Gastrocnemius medialis (tissue), 4 donors: ENCODE measurements at regions of chr19 and their contacts with region 1.

Region 1: DNA sequence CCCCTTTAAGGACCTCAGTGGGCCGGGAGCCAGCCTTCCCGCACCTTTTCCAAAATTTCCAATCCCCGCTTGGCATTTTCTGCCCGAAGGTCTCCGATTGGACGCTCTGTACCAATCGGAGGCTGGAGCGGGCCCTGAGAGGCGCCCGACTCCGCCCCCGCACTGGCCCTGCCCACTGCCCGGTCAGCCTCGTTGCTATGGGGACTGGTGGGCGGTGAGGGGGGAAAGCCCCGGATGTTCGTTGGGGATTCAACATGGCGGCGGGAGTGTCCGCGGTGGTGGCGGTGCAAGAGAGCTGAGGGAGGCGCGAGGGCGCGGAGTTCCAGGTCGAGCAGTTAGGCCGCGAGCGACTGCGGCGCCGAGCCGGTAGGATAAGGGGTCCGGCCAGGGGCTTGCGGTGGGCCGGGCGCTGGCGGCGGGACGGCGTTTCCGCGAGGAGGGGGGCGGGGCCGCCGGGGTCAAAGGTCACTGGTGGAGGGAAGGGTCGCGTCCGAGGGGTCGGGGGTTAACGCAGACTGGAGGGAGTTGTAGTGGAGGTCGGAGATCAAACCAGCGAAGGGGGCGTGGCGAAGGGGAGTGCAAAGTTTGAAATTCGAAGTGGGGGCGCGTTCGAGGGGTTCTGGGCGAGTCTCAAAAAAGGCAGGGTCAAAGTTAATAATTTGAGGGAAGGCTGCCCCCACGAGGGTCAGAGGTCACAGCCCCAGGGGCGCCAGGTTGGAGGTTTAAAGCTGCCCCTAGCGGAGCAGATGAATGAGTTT is at the start of gene PAK4:
- DNase-seq: peak; percentile 97 to 98
- ATAC-seq: peak; percentile 98
- H3K4me3 ChIP-seq: peak within 1 kb of the TSS; percentile 73 to 96 (median 82)
- H3K27ac ChIP-seq: peak within 1 kb of the TSS; percentile 76 to 90 (median 80)
- H3K4me1 ChIP-seq: peaks cover 13 to 29% of the 10 kb centered on the region in 2 donors
- H3K27me3 ChIP-seq: peaks cover 0 to 4% (median 3%) of the 10 kb centered on the region in 3 donors
- CTCF ChIP-seq: no peak
- POLR2A ChIP-seq: peak; percentile 30 to 47
- total RNA-seq, gene PAK4: 4.7 to 11.7 (median 8.3) TPM

Region 2: DNA sequence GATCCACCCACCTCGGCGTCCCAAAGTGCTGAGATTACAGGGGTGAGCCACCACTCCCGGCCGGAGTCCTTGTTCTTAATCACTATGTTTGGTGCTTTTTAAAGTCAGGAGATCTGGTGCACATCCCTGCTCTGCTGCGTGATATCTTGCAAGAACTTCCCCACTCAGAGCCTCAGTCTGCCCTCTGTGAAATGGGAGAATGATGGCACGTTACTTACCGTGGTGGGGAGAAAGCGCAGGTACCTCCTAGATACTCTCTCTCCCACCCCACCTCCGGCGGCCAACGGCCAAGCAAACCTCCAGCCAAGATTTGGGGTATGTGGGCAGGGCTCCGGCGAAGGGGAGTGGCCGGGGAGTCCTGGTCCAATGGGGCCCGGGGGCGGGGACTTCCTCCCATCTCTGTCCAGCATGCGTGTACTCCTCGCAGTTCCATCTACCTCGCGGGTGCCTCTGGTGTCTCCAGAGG is 692.4 kb before region 1 on chr19 and contains the start of gene RYR1:
- in situ Hi-C with region 1: no loop called
- intact Hi-C with region 1: no loop called
- DNase-seq: peak; percentile 92 to 96
- ATAC-seq: peak; percentile 63 to 66
- H3K4me3 ChIP-seq: peak within 1 kb of the TSS; percentile 69 to 94 (median 86)
- H3K27ac ChIP-seq: peak within 1 kb of the TSS; percentile 98 to 100 (median 98)
- H3K4me1 ChIP-seq: peaks cover 43 to 46% of the 10 kb centered on the region in 2 donors
- H3K27me3 ChIP-seq: no peaks in the 10 kb centered on the region
- CTCF ChIP-seq: no peak
- POLR2A ChIP-seq: peak; percentile 67 to 73
- total RNA-seq, gene RYR1: 607 to 831 (median 724) TPM

Region 3: DNA sequence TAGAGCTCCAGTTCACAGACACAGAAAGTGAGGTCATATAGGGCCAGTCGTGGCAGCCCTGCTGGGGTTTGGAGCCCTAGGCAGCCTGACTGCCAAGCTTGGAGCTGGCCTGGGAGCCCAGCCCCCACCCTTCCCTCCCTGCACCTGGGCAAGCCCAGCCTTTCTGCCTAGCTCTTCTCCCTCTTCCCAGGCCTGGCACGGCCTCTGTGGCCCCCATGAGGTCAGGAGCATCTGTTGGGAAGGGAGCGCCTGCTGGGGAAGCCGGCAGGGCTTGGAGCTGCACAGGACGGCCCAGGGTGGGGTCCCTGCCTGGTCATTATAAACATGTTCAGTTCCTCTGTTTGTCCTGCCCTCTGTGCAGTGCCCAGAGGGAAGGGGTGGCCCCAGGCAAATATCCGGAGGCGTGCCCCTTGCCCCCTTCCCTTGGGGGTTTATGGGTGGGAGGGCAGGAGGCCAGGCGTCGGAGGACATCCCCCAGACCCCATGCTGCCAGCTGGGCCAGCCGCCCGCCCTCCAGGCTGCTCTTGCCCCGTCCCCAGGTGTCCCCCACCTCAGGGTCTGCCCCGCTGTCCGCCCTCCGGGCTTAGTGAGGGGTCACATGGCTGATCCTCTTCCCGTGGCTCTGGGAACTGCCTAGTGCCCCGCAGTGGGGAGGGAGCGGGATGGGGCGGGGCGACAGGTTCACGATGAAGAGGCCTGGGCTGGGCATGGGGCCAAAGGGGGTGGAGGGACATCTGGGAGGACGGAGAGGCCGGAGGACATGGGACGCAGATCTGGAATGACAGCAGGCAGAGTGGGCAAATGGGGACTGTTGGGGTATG is 41.0 kb after region 1 on chr19:
- in situ Hi-C with region 1: no loop called
- intact Hi-C with region 1: no loop called
- DNase-seq: no peak
- ATAC-seq: no peak
- H3K4me3 ChIP-seq: no peak overlapping the region
- H3K27ac ChIP-seq: no peak overlapping the region
- H3K4me1 ChIP-seq: no peaks in the 10 kb centered on the region
- H3K27me3 ChIP-seq: no peaks in the 10 kb centered on the region
- CTCF ChIP-seq: no peak
- POLR2A ChIP-seq: no peak

Region 4: DNA sequence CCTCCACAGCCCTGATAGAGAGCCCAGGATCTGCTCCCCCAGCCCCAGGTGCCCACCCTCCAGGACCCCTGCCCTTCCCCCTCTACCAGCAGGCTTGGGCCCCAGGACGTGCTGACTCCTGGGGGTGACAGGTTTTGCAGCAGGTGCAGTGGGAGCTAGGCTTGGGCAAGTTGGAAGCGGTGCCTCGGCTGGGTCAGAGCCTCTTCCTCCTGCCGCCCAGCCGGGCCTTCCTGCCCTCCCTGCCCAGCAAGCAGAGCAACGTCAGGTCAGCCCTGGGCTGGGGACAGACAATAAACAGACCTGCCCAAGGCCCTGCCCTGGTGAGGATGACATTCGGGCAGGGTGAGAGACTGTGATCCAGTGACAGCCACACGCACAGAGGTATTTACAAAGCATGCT is 61.8 kb after region 1 on chr19:
- in situ Hi-C with region 1: no loop called
- intact Hi-C with region 1: loop called (anchors 2 kb)
- DNase-seq: no peak
- ATAC-seq: no peak
- H3K4me3 ChIP-seq: no peak overlapping the region
- H3K27ac ChIP-seq: no peak overlapping the region
- H3K4me1 ChIP-seq: no peaks in the 10 kb centered on the region
- H3K27me3 ChIP-seq: peaks cover 0 to 10% (median 0%) of the 10 kb centered on the region in 3 donors
- CTCF ChIP-seq: no peak
- POLR2A ChIP-seq: no peak

Region 5: DNA sequence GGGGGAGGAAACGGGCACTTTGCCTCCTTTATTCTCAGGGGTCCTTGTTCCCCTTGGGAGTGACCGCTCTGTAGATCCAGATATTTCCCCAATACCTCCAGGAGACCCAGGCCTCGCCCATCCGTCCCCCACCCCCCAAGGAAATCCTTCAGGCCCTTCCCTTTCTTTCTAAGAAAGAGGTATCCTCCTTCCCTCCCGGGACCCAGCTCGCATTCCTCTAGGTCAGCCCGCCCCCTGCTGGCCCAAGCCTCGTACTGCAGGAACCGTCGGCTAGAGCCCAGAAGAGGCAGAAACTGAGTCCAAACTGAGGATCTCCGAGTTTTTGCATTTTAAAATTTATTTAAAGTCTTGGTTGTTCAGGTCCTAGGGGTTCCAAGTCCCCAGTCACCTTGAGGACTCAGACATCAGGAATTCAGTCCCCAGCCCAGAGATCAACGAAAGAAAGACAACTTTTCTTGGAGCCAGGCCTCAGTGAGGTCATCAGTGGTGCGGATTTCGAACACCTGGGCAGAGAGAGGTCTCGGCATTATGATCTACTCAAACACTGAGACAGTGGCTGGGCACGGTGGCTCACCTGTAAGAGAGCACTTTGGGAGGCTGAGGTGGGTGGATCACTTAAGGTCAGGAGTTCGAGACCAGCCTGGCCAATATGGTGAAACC is 202.4 kb after region 1 on chr19:
- in situ Hi-C with region 1: loop called in 2 of 4 experiments (anchors 5 kb)
- intact Hi-C with region 1: loop called (anchors 1 kb)
- DNase-seq: peak; percentile 54 to 70
- ATAC-seq: peak; percentile 72 to 77
- H3K4me3 ChIP-seq: no peak overlapping the region
- H3K27ac ChIP-seq: no peak overlapping the region
- H3K4me1 ChIP-seq: peaks cover 0 to 3% of the 10 kb centered on the region in 2 donors
- H3K27me3 ChIP-seq: peaks cover 0 to 4% (median 0%) of the 10 kb centered on the region in 3 donors
- CTCF ChIP-seq: peak; percentile 73 to 97 (median 90)
- POLR2A ChIP-seq: no peak

Region 6: GRCh38 chr19:39480337-39481228 is 354.9 kb after region 1 on chr19 and contains the start of gene TIMM50:
- in situ Hi-C with region 1: no loop called
- intact Hi-C with region 1: loop called (anchors 2 kb)
- DNase-seq: peak; percentile 91 to 97
- ATAC-seq: peak; percentile 97 to 98
- H3K4me3 ChIP-seq: peak within 1 kb of the TSS; percentile 92 to 100 (median 99)
- H3K27ac ChIP-seq: peak within 1 kb of the TSS; percentile 88 to 95 (median 92)
- H3K4me1 ChIP-seq: peaks cover 11% of the 10 kb centered on the region in 2 donors
- H3K27me3 ChIP-seq: no peaks in the 10 kb centered on the region
- CTCF ChIP-seq: no peak
- POLR2A ChIP-seq: peak; percentile 44 to 71
- total RNA-seq, gene TIMM50: 66.9 to 97.6 (median 85.6) TPM